Activated B cell treated with CpG ODN at 0.5 μM for 24 hours (primary cell): ENCODE measurements at regions of chr15 and their contacts with region 1.

Region 1: DNA sequence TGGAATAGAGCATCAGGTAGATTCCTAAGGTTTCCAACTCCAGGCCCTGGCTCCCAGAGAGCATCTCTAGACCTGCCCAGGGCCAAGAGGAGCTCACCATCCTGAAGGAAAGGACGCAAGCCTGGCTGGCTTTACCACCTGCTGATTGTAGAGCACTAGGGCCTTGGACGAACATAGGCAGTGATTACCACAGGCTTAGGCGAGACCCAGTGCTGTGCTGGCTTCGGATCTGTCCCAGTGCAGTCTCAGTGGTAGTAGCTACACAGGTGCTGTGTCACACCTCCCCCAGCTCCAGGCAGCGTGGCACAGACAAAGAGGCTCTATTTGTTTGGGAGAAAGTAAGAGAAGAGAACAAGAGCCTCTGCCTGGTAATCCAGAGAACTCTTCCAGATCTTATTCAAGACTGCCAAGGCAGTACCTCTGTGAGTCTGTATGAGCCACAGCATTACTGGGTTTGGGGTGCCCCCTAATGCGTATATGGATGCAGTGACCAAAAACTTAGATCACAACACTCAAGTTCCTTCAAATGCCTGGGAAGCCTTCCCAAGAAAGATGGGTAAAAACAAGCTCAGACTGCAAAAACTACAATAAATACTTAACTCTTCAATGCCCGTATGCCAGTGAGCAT is 25.4 kb downstream of the ISG20 start:
- DNase-seq: no peak
- ATAC-seq: peak; percentile 81
- H3K4me3 Mint-ChIP-seq: no peak overlapping the region
- H3K27ac Mint-ChIP-seq: no peak overlapping the region
- H3K4me1 Mint-ChIP-seq: peaks cover 21% of the 10 kb centered on the region
- H3K27me3 Mint-ChIP-seq: peaks cover 6% of the 10 kb centered on the region
- CTCF ChIP-seq: no peak

Region 2: DNA sequence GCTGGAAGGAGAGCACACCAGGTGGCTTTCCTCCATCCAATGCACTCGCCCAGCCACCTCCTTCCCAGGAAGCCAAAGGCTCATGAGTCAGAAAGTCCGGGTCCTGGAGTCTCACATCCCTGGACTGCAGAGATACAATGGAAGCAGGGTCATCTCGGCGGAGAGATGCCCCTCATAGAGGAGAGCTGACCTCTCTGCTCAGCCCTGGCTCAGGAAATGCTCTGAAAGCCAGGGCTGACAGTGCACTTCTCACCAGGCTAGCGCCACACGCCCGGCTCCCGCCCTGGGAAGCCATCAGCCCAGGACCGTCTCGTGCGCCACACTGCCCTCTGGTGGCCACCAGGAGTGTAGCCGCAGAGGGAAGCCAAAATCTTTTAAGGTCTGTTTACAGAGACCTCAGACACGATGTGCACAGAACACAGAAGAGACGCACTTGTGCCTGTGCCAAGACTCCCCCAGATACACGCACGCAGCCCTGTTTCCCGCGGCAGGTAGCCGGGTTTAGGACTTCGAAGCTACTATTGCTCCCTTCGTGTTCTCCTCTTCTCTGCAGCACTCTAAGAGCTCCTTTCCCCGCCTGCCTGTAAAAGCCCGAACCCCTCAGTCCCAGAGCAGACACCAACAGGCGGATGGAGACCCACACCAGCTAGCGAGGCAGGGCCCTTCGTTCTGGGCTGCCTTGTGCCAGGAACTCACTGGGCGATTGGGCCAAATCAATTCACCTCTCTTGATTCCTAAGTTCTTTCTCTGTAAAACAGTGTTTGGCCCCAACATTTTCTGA is 417.4 kb before region 1 on chr15:
- CTCF ChIA-PET with region 1: no interaction called
- POLR2A ChIA-PET with region 1: no interaction called
- intact Hi-C with region 1: loop called (anchors 5 kb)
- DNase-seq: peak; percentile 64
- ATAC-seq: peak; percentile 74
- H3K4me3 Mint-ChIP-seq: no peak overlapping the region
- H3K27ac Mint-ChIP-seq: no peak overlapping the region
- H3K4me1 Mint-ChIP-seq: peaks cover 6% of the 10 kb centered on the region
- H3K27me3 Mint-ChIP-seq: peaks cover 11% of the 10 kb centered on the region
- CTCF ChIP-seq: no peak

Region 3: DNA sequence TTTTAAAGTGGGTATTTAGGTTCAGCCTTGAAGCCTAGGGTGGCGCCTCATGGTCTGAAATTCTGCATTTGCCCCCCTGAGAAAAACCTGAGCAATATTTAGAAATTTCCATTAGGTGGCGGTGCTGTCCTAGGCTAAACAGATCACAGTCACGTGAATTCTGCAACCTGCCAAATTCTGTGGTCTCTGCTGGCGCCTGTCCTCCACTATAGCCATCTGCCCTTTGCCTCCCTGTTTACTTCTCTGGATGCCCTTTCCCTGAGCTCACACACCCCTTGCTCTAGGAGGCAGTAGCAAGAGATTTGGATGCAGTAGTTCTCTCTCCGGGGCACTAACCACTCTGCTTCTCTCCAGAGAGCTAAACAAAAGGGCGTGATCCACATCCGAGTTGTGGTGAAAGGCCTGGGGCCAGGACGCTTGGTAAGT is 187.6 kb before region 1 on chr15:
- CTCF ChIA-PET with region 1: interaction called, 6 read pairs
- POLR2A ChIA-PET with region 1: no interaction called
- intact Hi-C with region 1: loop called (anchors 1 kb)
- DNase-seq: no peak
- ATAC-seq: peak; percentile 28
- H3K4me3 Mint-ChIP-seq: no peak overlapping the region
- H3K27ac Mint-ChIP-seq: no peak overlapping the region
- H3K4me1 Mint-ChIP-seq: peaks cover 8% of the 10 kb centered on the region
- H3K27me3 Mint-ChIP-seq: no peaks in the 10 kb centered on the region
- CTCF ChIP-seq: no peak

Region 4: DNA sequence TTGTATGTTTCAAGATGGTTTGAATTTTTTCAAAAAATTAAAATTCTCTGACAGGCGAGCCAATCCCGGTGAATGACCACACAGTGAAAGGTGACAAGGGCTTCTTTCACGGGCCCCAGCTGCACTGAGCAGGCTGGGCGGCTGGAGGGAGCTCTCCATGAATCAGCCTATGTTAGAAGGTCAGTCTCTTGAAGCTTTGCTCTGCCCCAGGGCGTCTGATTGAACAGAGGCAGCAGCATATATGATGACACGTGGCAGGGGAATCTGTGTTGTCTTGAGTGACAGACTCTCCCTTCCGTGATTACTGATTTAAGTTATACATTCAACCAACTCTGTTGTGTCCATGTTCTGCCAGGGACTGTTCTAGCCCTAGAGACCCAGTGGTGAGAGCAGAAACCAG is 26.1 kb after region 1 on chr15:
- CTCF ChIA-PET with region 1: no interaction called
- POLR2A ChIA-PET with region 1: no interaction called
- intact Hi-C with region 1: no loop called
- DNase-seq: no peak
- ATAC-seq: no peak
- H3K4me3 Mint-ChIP-seq: no peak overlapping the region
- H3K27ac Mint-ChIP-seq: no peak overlapping the region
- H3K4me1 Mint-ChIP-seq: no peaks in the 10 kb centered on the region
- H3K27me3 Mint-ChIP-seq: peaks cover 25% of the 10 kb centered on the region
- CTCF ChIP-seq: no peak